ENCODE measurements at regions of chr16 and their contacts with region 1.

Region 1: GRCh38 chr16:16120382-16121184 is 102.7 kb downstream of the ABCC6 start:
- DNase-seq: peak in 3 of 4 donors; percentile 16 to 31 (median 28)
- ATAC-seq: peak; percentile 18
- H3K4me3 ChIP-seq: no peak overlapping the region
- H3K27ac ChIP-seq: peak overlapping the region in 1 of 4 donors; percentile 5
- H3K4me1 ChIP-seq: no peaks in the 10 kb centered on the region
- H3K27me3 ChIP-seq: no peaks in the 10 kb centered on the region
- CTCF ChIP-seq: no peak
- POLR2A ChIP-seq: no peak

Region 2: GRCh38 chr16:15874745-15875314 is 245.8 kb before region 1 on chr16:
- intact Hi-C with region 1: loop called (anchors 5 kb)
- DNase-seq: peak; percentile 54 to 71 (median 62)
- ATAC-seq: peak; percentile 80
- H3K4me3 ChIP-seq: no peak overlapping the region
- H3K27ac ChIP-seq: no peak overlapping the region
- H3K4me1 ChIP-seq: no peaks in the 10 kb centered on the region
- H3K27me3 ChIP-seq: no peaks in the 10 kb centered on the region
- CTCF ChIP-seq: peak; percentile 42 to 75 (median 66)
- POLR2A ChIP-seq: no peak